Natural killer cell (primary cell): ENCODE measurements at regions of chr6 and their contacts with region 1.

Region 1: GRCh38 chr6:40587240-40588069 is at the start of gene LRFN2:
- DNase-seq: peak; percentile 77 to 82
- ATAC-seq: peak; percentile 87 to 88 (median 88)
- H3K4me3 ChIP-seq: peak within 1 kb of the TSS; percentile 47
- H3K4me3 Mint-ChIP-seq: peak within 1 kb of the TSS; percentile 94
- H3K27ac ChIP-seq: no peak within 1 kb of the TSS
- H3K27ac Mint-ChIP-seq: peak within 1 kb of the TSS; percentile 68 to 88
- H3K4me1 ChIP-seq: peaks cover 45% of the 10 kb centered on the region
- H3K4me1 Mint-ChIP-seq: peaks cover 0 to 54% of the 10 kb centered on the region in 2 donors
- H3K27me3 ChIP-seq: peaks cover 3% of the 10 kb centered on the region
- H3K27me3 Mint-ChIP-seq: no peaks in the 10 kb centered on the region
- CTCF ChIP-seq: peak; percentile 66
- total RNA-seq, gene LRFN2: 3.0 to 3.6 (median 3.5) TPM

Region 2: DNA sequence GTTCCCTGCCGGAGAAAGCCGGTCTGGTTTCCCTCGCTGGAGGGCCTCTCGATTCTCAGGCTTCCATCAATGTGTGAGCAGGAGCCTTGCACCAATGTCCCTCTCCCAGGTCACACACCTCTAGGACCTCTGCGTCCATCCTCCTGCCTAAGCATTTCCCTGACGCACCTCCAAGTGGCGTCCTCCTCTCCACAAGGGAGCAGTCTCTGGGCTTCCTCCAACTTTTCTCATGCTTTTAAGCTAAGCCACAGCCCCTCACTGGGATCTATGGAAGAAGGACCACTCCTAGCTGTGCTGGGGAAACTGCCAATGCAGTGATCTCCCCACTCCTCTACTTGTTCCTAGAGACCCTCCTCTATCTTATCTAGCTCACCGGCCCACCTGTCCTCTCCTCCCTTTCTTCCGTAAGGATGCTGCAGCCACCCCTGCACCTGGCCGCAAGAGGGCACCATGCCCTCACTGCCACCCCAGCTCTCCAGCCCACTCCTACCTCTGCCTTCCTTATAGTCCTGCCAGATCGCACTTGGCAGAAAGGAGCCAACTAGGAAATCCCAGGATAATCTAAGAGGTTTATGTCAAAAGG is 259.0 kb before region 1 on chr6:
- intact Hi-C with region 1: loop called (anchors 1 kb)
- DNase-seq: peak; percentile 44 to 66
- ATAC-seq: peak; percentile 52 to 75 (median 71)
- H3K4me3 ChIP-seq: no peak overlapping the region
- H3K4me3 Mint-ChIP-seq: no peak overlapping the region
- H3K27ac ChIP-seq: no peak overlapping the region
- H3K27ac Mint-ChIP-seq: peak overlapping the region in 1 of 2 donors; percentile 67
- H3K4me1 ChIP-seq: no peaks in the 10 kb centered on the region
- H3K4me1 Mint-ChIP-seq: peaks cover 7 to 19% of the 10 kb centered on the region in 2 donors
- H3K27me3 ChIP-seq: no peaks in the 10 kb centered on the region
- H3K27me3 Mint-ChIP-seq: peaks cover 16 to 53% of the 10 kb centered on the region in 2 donors
- CTCF ChIP-seq: peak; percentile 72